Activated naive CD4-positive, alpha-beta T cell treated with anti-CD3 and anti-CD28 coated beads, Interleukin-2, amount 10 ng/mL, durations not matched to agents 7 days and 5 days (primary cell): ENCODE measurements at regions of chr12 and their contacts with region 1.

Region 1: GRCh38 chr12:6620137-6620884 is 13.1 kb upstream of the CHD4 start:
- DNase-seq: peak; percentile 66
- H3K4me3 Mint-ChIP-seq: peak overlapping the region; percentile 38
- H3K27ac Mint-ChIP-seq: no peak overlapping the region
- H3K4me1 Mint-ChIP-seq: peaks cover 13% of the 10 kb centered on the region
- H3K27me3 Mint-ChIP-seq: no peaks in the 10 kb centered on the region

Region 2: DNA sequence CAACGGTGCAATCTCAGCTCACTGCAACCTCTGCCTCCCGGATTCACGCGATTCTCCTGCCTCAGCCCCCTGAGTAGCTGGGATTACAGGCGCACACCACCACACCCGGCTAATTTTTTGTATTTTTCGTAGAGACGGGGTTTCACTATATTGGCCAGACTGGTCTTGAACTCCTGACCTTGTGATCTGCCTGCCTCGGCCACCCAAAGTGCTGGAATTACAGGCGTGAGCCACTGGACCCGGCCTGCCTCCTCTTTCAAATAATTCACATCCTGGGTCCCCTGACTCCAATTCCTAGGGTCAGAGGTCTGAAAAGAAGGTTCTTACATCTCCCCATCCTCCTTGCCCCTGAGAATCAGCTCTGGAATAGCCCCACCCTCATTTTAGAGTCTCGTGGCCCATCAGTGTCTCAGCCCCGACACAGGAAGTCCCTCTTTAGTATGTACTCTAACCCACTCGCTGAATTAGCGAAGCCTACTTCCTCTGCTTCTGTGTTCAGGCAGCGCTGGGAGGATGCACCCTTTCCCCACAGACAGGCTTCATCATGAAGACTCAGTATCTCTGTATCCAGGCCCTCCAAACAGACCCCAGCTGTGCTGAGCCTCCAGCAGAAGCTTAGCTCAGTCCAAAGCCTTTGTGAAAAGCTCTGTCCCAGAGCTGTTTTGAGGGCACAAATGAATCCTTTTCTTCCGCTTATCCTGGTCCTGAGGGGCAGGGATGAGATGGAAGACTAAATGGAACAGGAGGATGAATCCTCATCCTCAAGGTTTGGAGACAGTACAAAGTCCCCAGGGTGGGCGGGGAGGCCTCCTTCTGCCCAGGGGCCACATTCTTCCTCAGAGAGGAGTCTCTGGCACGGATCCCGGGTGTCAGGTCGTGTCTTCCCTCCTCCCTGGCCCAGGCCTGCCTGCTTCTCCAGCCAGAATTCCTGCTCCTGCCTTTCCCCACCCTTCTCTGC is 12.0 kb after region 1 on chr12:
- CTCF ChIA-PET with region 1: interaction called, 17 read pairs
- DNase-seq: peak; percentile 68
- H3K4me3 Mint-ChIP-seq: peak overlapping the region; percentile 75
- H3K27ac Mint-ChIP-seq: peak overlapping the region; percentile 94
- H3K4me1 Mint-ChIP-seq: peaks cover 61% of the 10 kb centered on the region
- H3K27me3 Mint-ChIP-seq: peaks cover 6% of the 10 kb centered on the region

Region 3: GRCh38 chr12:6684609-6685008 is 64.3 kb after region 1 on chr12:
- CTCF ChIA-PET with region 1: interaction called, 30 read pairs
- DNase-seq: peak; percentile 67
- H3K4me3 Mint-ChIP-seq: no peak overlapping the region
- H3K27ac Mint-ChIP-seq: peak overlapping the region; percentile 54
- H3K4me1 Mint-ChIP-seq: peaks cover 53% of the 10 kb centered on the region
- H3K27me3 Mint-ChIP-seq: no peaks in the 10 kb centered on the region

Region 4: GRCh38 chr12:6697584-6698351 is 77.5 kb after region 1 on chr12:
- CTCF ChIA-PET with region 1: interaction called, 17 read pairs
- DNase-seq: peak; percentile 46
- H3K4me3 Mint-ChIP-seq: no peak overlapping the region
- H3K27ac Mint-ChIP-seq: no peak overlapping the region
- H3K4me1 Mint-ChIP-seq: peaks cover 20% of the 10 kb centered on the region
- H3K27me3 Mint-ChIP-seq: peaks cover 72% of the 10 kb centered on the region

Region 5: GRCh38 chr12:6778574-6779550 is 158.6 kb after region 1 on chr12:
- CTCF ChIA-PET with region 1: interaction called, 10 read pairs
- DNase-seq: peak; percentile 94
- H3K4me3 Mint-ChIP-seq: peak overlapping the region; percentile 75
- H3K27ac Mint-ChIP-seq: peak overlapping the region; percentile 56
- H3K4me1 Mint-ChIP-seq: peaks cover 69% of the 10 kb centered on the region
- H3K27me3 Mint-ChIP-seq: peaks cover 51% of the 10 kb centered on the region

Region 6: DNA sequence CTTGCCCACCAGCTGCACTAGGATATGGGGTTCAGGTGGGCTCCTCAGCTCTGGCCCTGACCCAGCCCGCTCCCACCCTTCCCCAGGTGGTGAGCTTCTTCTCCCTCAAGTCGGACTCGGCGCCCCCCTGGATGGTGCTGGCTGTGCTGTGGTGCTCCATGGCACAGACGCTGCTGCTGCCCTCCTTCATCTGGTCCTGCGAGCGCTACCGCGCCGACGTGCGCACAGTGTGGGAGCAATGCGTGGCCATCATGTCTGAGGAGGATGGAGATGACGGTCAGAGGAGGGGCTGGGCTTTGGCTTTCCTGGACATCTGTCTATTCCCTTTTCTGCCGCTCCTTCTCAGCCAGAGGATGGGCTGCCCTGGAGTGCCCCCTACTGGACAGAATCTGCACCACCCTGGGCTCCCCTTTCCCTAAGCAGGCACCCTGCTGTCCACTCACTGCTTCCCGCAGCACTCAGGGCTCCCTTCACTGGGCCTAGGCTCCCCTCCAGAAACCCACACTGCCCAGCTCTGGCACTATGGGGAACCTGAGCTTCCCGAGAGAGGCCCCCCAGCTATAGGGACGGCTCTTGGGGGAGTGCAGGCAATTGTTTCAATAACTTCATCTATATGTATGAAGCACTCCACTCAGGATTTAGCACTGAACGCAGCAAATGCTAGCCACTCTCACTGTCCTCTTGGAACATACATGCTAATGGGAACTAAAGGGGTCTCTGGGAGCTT is 205.2 kb after region 1 on chr12:
- CTCF ChIA-PET with region 1: interaction called, 11 read pairs
- DNase-seq: peak; percentile 89
- H3K4me3 Mint-ChIP-seq: no peak overlapping the region
- H3K27ac Mint-ChIP-seq: no peak overlapping the region
- H3K4me1 Mint-ChIP-seq: peaks cover 38% of the 10 kb centered on the region
- H3K27me3 Mint-ChIP-seq: peaks cover 99% of the 10 kb centered on the region